ENCODE measurements at regions of chr16 and their contacts with region 1.

Region 1: DNA sequence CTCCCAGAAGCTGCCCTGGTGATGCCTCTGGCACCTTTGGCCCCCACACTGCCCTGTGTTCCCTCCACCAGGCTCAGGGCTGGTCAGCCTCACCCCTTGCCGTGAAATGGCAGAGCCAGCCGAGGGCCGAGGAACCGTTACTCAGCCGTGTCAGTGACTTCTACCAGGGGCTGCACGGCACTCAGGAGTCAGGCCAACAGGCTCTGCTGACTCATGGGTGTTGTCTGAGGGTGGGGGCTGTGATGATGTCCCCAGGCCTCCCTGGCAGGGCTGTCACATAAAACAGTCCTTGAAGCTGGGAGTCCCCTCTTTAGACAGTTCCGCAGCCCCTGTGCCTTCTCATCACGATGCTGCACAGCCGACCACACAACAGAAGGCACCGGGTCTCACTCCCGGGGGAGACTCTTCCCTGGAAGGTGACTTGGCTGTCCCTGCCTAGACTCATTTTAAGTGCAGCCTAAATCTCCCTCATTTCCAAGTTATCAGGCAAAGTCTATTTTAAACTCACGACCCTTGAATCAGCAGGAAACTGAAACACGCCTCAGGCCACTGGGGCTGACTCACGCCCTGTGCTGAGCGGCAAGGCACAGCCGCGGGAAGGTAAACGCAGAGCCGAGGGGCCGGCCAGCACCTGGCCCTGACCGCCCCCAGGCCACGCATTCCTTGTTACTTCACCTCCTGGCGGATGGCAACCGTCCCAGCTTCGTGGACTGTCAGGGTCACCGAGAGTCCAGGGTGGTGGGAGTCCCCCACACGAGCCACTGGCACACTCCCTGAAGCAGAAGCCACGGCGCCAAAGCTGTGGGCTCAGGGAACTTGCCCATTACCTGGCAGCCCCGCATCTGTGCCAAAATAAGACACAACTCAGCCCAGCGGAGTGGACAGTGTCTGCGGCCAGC is 102.6 kb downstream of the ZNF778 start:
- DNase-seq: no peak
- H3K4me3 ChIP-seq: peak overlapping the region in 1 of 2 experiments; percentile 44; a peak in 2 of 4 replicates
- H3K27ac ChIP-seq: peak overlapping the region; percentile 58 to 89
- H3K4me1 ChIP-seq: peaks cover 66 to 82% of the 10 kb centered on the region in 2 experiments; a peak in 3 of 4 replicates
- H3K27me3 ChIP-seq: no peaks in the 10 kb centered on the region
- CTCF ChIP-seq: no peak
- EP300 ChIP-seq: peak in 1 of 2 experiments; percentile 46; a peak in 1 of 4 replicates
- RAD21 ChIP-seq: no peak

Region 2: DNA sequence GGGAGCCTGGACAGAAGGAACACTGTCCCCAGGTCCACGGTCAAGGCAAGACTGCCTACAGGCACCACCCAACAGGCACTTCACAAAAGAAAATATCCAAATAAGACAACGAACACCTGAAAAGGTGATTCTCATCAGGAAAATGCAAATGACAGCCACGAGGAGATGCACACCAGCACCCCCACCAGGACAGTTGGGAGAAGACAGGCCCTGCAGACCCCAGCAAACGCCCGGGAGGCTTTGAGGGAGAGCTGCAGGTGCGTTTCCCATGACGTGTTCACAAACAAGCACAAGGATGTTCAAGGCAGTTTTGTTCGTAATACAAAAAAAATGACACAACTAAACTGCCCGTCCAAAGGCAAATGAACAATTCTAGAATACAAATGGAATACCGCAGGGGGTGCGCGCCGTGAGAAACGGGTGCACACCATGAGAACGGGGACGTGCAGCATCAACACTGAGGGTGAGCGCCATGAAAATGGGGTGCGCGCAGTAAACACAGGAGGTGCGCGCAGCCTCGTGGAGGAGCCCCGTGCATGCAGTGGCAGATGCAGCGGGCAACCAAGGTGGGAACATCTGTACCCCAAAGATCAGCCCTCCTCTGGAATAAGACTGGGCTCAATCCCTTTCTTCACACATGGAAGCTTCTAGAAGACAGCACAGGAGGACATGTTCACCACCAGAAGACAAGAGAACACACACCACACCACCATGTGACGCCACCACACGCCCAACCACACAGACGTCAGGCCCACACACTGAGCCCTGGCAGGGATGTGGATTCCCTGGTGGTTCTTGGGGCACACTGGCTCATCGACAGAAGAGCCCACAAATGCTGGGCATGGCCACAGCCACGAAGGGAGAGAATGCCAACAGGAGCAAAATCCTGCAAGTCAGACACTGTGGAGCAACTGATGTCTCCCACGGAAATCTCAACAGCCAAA is 11.5 kb before region 1 on chr16:
- CTCF ChIA-PET with region 1: interaction called, 18 read pairs
- POLR2A ChIA-PET with region 1: no interaction called
- DNase-seq: peak; percentile 68
- H3K4me3 ChIP-seq: no peak overlapping the region
- H3K27ac ChIP-seq: no peak overlapping the region
- H3K4me1 ChIP-seq: peaks cover 0 to 2% of the 10 kb centered on the region in 2 experiments; a peak in 1 of 4 replicates
- H3K27me3 ChIP-seq: no peaks in the 10 kb centered on the region
- CTCF ChIP-seq: peak; percentile 59
- EP300 ChIP-seq: no peak
- RAD21 ChIP-seq: 0 out of 2 replicates have a peak, but pooled peaks have one; percentile 3